Sciatic nerve (tissue), 2 donors: ENCODE measurements at regions of chr13 and their contacts with region 1.

Region 1: DNA sequence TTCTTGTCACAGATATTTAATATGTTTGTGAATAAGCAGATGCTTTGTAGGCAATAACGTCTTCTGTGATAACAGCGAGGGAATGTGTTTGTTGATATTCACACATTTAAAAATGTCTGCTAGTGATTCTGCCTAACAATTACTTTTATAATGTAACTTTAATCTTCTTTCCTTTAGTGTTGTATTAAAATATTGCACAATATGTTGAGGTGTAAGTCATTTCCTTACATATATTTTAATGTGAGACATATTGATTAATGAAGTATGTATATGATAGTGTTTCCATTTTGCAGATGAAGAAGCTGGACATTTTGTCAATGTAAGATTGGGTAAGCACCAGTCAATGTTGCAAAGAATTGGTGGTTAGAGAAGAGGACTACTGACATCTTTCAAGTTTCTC is 324.4 kb downstream of the SLITRK1 start:
- DNase-seq: no peak
- ATAC-seq: no peak

Region 2: DNA sequence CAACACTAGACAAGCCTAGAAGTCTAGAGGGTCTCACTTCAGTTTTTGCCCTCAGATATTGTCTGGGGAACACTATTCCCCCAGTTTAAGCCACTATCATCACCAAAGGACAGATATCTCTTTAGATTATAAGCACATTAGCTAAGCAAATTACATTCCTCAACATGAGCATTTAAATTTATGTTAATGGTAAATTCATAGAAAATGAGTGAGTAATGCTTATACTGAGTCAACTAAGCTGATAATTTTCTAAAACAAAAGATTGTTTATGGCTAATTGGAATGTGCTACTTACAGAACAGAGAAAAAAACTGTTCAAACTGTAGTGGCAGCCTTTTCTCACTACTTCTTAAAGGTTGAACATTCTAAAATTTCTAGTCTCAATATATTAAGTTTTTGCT is 34.2 kb after region 1 on chr13:
- intact Hi-C with region 1: no loop called
- DNase-seq: no peak
- ATAC-seq: no peak

Region 3: DNA sequence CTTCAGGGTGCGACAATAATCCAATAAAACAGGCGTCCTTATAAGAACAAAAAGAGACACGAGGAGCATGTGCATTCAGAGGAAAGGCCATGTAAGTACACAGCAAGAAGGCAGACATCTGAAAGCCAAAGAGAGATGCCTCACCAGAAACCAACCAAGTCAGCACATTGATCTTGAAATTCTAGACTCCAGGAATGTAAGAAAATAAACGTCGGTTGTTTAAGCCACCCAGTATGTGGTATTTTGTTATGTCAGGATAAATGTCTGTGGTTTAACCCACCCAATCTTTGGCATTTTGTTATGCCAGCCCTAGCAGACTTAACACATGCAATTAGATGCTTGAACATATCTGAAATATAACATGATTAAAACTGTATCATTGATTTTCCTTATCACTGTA is 1789.4 kb after region 1 on chr13:
- intact Hi-C with region 1: loop called (anchors 5 kb)
- DNase-seq: no peak
- ATAC-seq: no peak